ENCODE measurements at regions of chr1 and their contacts with region 1.

Region 1: GRCh38 chr1:36172983-36173382 is 17.0 kb downstream of the MAP7D1 start:
- DNase-seq: peak; percentile 96
- H3K4me3 ChIP-seq: no peak overlapping the region
- H3K27ac ChIP-seq: peak overlapping the region; percentile 86
- H3K4me1 ChIP-seq: peaks cover 59% of the 10 kb centered on the region
- H3K27me3 ChIP-seq: no peaks in the 10 kb centered on the region
- CTCF ChIP-seq: no peak

Region 2: DNA sequence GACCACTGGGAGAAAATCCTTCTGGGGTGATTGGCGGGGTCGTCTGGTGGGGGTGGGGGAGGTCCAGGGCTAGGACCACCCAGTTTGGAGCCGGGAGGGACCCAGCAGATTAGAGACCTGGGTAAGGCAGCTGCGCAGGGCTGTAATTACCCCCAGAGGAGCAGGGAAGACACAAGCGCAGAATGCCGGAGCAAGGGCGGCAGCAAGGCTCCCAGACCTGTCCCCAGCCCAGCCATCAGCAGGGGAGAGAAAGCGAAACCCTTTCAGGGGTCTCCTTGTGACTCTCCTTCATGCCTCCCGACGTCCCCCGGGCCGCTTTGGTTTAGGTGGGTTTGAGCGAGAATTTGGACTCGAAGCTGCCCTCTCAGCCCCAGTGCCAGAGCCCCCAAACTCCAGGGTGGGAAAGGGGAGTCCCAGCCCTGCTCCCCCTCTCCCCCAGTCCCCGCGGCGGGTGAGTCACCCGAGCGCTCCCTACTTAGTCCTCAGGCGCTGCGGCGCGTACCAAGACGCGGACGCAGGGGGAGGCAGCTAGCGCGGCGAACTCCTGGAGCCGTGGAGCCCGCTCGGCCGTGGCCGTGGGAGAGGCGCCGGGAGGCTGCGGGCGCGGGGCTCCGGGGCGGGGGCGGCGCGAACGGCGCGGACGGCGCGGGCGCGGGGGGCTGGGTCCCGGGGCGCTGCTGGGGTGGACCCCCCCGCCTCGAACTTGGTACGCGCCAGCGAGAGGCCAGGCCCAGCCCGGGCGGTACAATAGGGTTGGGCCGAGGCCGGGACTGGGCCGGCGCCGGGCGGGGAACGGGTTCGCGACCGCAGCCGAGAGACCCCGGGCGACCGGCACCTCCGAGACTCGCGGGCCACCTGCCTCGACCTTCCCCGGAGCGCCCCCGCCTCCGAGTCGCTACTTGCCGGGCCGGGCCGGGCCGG is 17.3 kb before region 1 on chr1 and contains the start of gene MAP7D1:
- CTCF ChIA-PET with region 1: no interaction called
- dilution Hi-C with region 1: no loop called
- in situ Hi-C with region 1: no loop called
- intact Hi-C with region 1: loop called (anchors 2 kb)
- DNase-seq: peak; percentile 76
- H3K4me3 ChIP-seq: peak within 1 kb of the TSS; percentile 59 to 95 (median 84)
- H3K27ac ChIP-seq: peak within 1 kb of the TSS; percentile 84
- H3K4me1 ChIP-seq: peaks cover 48% of the 10 kb centered on the region
- H3K27me3 ChIP-seq: no peaks in the 10 kb centered on the region
- CTCF ChIP-seq: no peak
- total RNA-seq, gene MAP7D1: 99.4 to 331 TPM

Region 3: DNA sequence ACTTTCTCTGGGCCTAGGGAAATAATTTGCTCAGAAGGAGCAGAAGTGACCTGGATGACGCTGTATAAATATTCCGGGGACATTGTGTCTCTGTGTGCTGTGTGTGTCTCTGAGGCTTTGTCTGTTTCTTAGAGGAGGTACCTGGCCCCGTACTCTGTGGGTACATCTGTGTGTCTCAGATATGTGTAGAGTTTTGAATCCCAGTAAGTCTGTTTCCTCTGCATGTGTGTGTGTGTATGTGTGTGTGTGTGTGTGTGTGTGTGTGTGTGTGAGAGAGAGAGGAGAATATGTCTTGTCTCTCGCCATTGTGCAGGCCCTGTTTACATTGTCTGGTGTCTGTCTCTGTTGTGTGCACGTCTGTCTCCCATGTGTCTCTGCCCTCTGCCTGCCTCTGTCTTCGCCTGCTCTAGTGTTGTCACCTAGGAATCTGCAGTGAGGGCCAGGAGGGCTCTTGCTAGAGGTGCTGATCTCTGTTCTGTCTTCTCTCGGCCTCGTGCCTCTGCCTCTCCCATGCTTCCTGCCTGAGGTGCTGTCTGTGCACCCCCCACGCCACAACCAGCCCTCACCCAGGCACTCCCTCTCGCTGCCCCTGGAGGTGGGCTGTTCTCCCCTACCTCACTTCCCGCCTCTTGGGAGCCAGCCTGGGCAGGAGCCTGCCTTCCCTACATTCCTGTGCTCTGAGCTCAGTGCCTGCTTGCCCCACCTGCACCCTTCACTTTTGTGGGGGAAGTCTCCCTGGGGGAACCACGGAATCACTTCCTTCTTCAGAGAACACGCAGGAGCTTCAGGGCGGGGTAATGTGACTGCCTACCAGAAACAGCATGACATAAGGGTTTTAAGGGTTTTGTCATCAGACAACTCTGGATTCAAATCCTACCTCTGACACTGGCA is 11.1 kb before region 1 on chr1:
- CTCF ChIA-PET with region 1: no interaction called
- dilution Hi-C with region 1: no loop called
- in situ Hi-C with region 1: no loop called
- intact Hi-C with region 1: loop called (anchors 1 kb)
- DNase-seq: peak; percentile 94
- H3K4me3 ChIP-seq: peak overlapping the region; percentile 7 to 41 (median 8)
- H3K27ac ChIP-seq: peak overlapping the region; percentile 83
- H3K4me1 ChIP-seq: peaks cover 73% of the 10 kb centered on the region
- H3K27me3 ChIP-seq: no peaks in the 10 kb centered on the region
- CTCF ChIP-seq: no peak

Region 4: GRCh38 chr1:36285448-36286101 is 112.6 kb after region 1 on chr1:
- CTCF ChIA-PET with region 1: no interaction called
- dilution Hi-C with region 1: no loop called
- in situ Hi-C with region 1: no loop called
- intact Hi-C with region 1: no loop called
- DNase-seq: peak; percentile 68
- H3K4me3 ChIP-seq: no peak overlapping the region
- H3K27ac ChIP-seq: no peak overlapping the region
- H3K4me1 ChIP-seq: no peaks in the 10 kb centered on the region
- H3K27me3 ChIP-seq: no peaks in the 10 kb centered on the region
- CTCF ChIP-seq: peak; percentile 60 to 70